B cell (primary cell): ENCODE measurements at regions of chr12 and their contacts with region 1.

Region 1: DNA sequence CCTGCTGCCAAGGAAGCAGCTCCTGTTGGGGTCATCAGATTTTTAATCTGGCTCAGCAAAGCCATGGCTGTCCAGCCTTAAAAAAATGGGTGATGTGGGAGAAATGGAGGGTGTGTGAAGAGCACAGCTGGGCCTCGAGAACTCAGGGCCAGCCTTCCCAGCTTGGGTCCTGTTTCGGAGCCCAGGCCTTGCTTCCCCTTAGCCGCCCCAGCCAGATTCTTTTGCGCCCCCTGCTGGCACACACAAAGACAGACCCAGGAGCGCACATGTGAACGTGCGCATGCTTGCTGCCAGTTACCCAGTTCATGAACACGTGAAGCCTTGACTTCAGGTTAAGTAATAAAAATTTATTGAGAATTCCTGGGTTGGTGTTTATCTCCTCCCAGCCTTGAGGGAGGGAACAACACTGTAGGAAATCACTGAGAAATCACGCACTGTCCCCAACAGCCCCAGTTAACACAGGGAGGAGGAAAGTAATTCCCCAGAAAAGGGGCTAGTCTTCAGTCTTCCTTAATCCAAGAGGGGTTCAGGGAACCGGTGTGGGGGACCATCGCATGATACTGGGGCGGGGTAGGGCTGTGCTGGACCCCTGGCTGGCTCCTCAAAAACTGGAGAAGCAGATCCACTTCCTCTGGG is 5.3 kb downstream of the PHB2 start:
- DNase-seq: peak; percentile 93
- ATAC-seq: peak; percentile 57
- H3K4me3 ChIP-seq: no peak overlapping the region
- H3K4me3 Mint-ChIP-seq: no peak overlapping the region
- H3K27ac ChIP-seq: peak overlapping the region; percentile 30 to 63
- H3K27ac Mint-ChIP-seq: peak overlapping the region; percentile 91
- H3K4me1 ChIP-seq: peaks cover 58 to 69% of the 10 kb centered on the region in 2 donors
- H3K4me1 Mint-ChIP-seq: peaks cover 63% of the 10 kb centered on the region
- H3K27me3 ChIP-seq: no peaks in the 10 kb centered on the region
- H3K27me3 Mint-ChIP-seq: no peaks in the 10 kb centered on the region
- CTCF ChIP-seq: peak; percentile 88

Region 2: GRCh38 chr12:6867413-6868210 is 97.5 kb before region 1 on chr12 and contains the start of gene TPI1:
- CTCF ChIA-PET with region 1: interaction called, 110 read pairs
- POLR2A ChIA-PET with region 1: interaction called, 7 read pairs
- intact Hi-C with region 1: loop called (anchors 1 kb)
- DNase-seq: peak; percentile 83
- ATAC-seq: peak; percentile 83
- H3K4me3 ChIP-seq: peak within 1 kb of the TSS; percentile 56 to 88 (median 68)
- H3K4me3 Mint-ChIP-seq: peak within 1 kb of the TSS; percentile 96
- H3K27ac ChIP-seq: peak within 1 kb of the TSS; percentile 70 to 77
- H3K27ac Mint-ChIP-seq: peak within 1 kb of the TSS; percentile 97
- H3K4me1 ChIP-seq: peaks cover 33 to 41% of the 10 kb centered on the region in 2 donors
- H3K4me1 Mint-ChIP-seq: peaks cover 50% of the 10 kb centered on the region
- H3K27me3 ChIP-seq: no peaks in the 10 kb centered on the region
- H3K27me3 Mint-ChIP-seq: no peaks in the 10 kb centered on the region
- CTCF ChIP-seq: no peak
- total RNA-seq, gene TPI1: 178 and 181 TPM in 2 replicates

Region 3: GRCh38 chr12:6904280-6905278 is 60.6 kb before region 1 on chr12 and contains the start of gene LRRC23:
- CTCF ChIA-PET with region 1: no interaction called
- POLR2A ChIA-PET with region 1: no interaction called
- intact Hi-C with region 1: loop called (anchors 1 kb)
- DNase-seq: peak; percentile 98
- ATAC-seq: peak; percentile 98
- H3K4me3 ChIP-seq: peak within 1 kb of the TSS; percentile 59 to 86 (median 74)
- H3K4me3 Mint-ChIP-seq: no peak within 1 kb of the TSS
- H3K27ac ChIP-seq: peak within 1 kb of the TSS; percentile 82 to 94
- H3K27ac Mint-ChIP-seq: no peak within 1 kb of the TSS
- H3K4me1 ChIP-seq: peaks cover 14 to 24% of the 10 kb centered on the region in 2 donors
- H3K4me1 Mint-ChIP-seq: peaks cover 6% of the 10 kb centered on the region
- H3K27me3 ChIP-seq: no peaks in the 10 kb centered on the region
- H3K27me3 Mint-ChIP-seq: no peaks in the 10 kb centered on the region
- CTCF ChIP-seq: no peak
- total RNA-seq, gene LRRC23: 14.4 and 15.5 TPM in 2 replicates

Region 4: DNA sequence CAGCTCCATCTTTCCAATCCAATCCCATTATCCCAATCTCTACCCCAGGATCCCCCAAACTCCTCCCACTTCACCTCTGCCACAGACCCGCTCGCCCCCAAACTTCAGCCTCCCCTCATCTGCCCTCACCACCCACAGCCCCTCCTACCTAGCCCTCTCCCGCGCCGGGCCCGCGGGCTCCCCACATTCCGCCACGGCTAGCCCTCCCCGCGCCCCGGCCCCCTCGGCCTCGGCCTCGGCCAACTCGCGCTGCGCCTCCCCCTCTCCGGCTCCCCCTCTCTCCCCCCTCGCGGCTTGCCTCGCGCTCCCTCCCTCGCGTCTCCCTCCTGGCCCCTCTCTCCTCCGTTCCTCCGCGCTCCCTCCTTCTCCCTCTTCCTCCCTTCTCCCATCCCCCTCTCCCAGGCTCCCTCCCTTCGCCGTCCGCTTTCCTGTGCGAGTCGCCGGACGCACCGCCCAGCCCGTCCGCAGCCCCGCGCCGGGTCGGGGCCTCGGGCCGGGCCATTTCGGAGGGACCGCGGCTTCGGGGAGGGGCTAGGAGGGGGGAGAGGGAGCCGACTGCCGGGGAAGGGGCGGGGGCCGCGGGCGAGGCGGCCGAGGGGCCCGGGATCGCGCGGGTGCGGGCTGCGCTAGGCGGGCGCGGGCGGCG is 37.6 kb before region 1 on chr12 and contains the start of gene ATN1:
- CTCF ChIA-PET with region 1: interaction called, 119 read pairs
- POLR2A ChIA-PET with region 1: interaction called, 9 read pairs
- intact Hi-C with region 1: loop called (anchors 1 kb)
- DNase-seq: peak; percentile 71
- ATAC-seq: peak; percentile 44
- H3K4me3 ChIP-seq: peak within 1 kb of the TSS; percentile 15 to 86 (median 83)
- H3K4me3 Mint-ChIP-seq: peak within 1 kb of the TSS; percentile 88
- H3K27ac ChIP-seq: peak within 1 kb of the TSS; percentile 69 to 84
- H3K27ac Mint-ChIP-seq: peak within 1 kb of the TSS; percentile 97
- H3K4me1 ChIP-seq: peaks cover 36 to 51% of the 10 kb centered on the region in 2 donors
- H3K4me1 Mint-ChIP-seq: peaks cover 56% of the 10 kb centered on the region
- H3K27me3 ChIP-seq: no peaks in the 10 kb centered on the region
- H3K27me3 Mint-ChIP-seq: no peaks in the 10 kb centered on the region
- CTCF ChIP-seq: no peak
- total RNA-seq, gene ATN1: 49.5 and 50.8 TPM in 2 replicates

Region 5: GRCh38 chr12:6944381-6945186 is 20.6 kb before region 1 on chr12:
- CTCF ChIA-PET with region 1: interaction called, 944 read pairs
- POLR2A ChIA-PET with region 1: interaction called, 662 read pairs
- intact Hi-C with region 1: loop called (anchors 1 kb)
- DNase-seq: peak; percentile 91
- ATAC-seq: peak; percentile 46
- H3K4me3 ChIP-seq: peak overlapping the region; percentile 25 to 92 (median 80)
- H3K4me3 Mint-ChIP-seq: peak overlapping the region; percentile 97
- H3K27ac ChIP-seq: peak overlapping the region; percentile 93 to 99
- H3K27ac Mint-ChIP-seq: peak overlapping the region; percentile 97
- H3K4me1 ChIP-seq: peaks cover 56 to 73% of the 10 kb centered on the region in 2 donors
- H3K4me1 Mint-ChIP-seq: peaks cover 63% of the 10 kb centered on the region
- H3K27me3 ChIP-seq: no peaks in the 10 kb centered on the region
- H3K27me3 Mint-ChIP-seq: no peaks in the 10 kb centered on the region
- CTCF ChIP-seq: peak; percentile 90

Region 6: GRCh38 chr12:7108796-7109571 is 143.8 kb after region 1 on chr12 and contains the start of gene C1RL:
- CTCF ChIA-PET with region 1: interaction called, 6 read pairs
- POLR2A ChIA-PET with region 1: no interaction called
- intact Hi-C with region 1: loop called (anchors 2 kb)
- DNase-seq: peak; percentile 83
- ATAC-seq: peak; percentile 50
- H3K4me3 ChIP-seq: peak within 1 kb of the TSS; percentile 74 to 94 (median 89)
- H3K4me3 Mint-ChIP-seq: peak within 1 kb of the TSS; percentile 97
- H3K27ac ChIP-seq: peak within 1 kb of the TSS; percentile 63 to 76
- H3K27ac Mint-ChIP-seq: peak within 1 kb of the TSS; percentile 98
- H3K4me1 ChIP-seq: peaks cover 12 to 18% of the 10 kb centered on the region in 2 donors
- H3K4me1 Mint-ChIP-seq: peaks cover 28% of the 10 kb centered on the region
- H3K27me3 ChIP-seq: no peaks in the 10 kb centered on the region
- H3K27me3 Mint-ChIP-seq: no peaks in the 10 kb centered on the region
- CTCF ChIP-seq: peak; percentile 92
- total RNA-seq, gene C1RL: 24.9 and 28.9 TPM in 2 replicates